ENCODE measurements at regions of chr14 and their contacts with region 1.

Region 1: DNA sequence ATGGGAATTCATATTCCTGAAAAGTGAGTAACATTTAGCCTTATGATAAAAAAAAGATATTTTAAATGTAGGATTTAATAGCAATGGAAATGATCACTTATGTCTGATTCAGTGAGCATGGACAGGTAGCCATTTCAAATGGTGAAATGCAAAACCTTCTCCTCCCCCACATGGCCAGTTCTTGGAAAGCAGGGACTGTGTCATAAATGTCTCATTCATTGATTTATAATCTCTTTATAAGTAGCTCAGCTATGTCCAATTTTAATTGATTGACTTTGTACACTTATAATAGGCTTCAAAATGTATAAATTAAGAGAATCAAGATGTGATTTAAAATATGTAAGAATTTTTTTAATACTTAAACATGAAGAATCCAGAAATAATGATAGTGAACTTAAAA is 24.6 kb upstream of the SCFD1 start:
- DNase-seq: no peak
- ATAC-seq: no peak
- H3K4me3 Mint-ChIP-seq: no peak overlapping the region
- H3K27ac Mint-ChIP-seq: no peak overlapping the region
- H3K4me1 Mint-ChIP-seq: no peaks in the 10 kb centered on the region
- H3K27me3 Mint-ChIP-seq: no peaks in the 10 kb centered on the region
- CTCF ChIP-seq: no peak

Region 2: DNA sequence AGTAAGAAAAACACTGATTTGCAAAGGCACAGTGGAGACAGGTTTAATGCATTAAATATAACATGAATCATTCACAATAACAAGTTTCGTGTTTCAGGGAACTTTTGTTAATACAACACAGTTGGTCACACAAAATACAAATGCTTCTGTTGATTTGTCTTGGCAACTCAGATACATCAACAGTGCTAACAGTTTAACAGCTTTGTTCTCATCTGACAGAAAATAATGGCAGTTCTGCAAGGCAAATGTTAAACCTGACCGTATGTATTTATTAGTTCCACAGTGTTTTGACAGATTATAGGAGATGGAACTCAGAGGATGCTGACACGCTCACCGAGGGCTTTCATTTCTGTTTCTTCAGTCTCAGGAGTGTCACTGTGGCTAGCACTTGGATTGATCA is 1020.6 kb before region 1 on chr14:
- CTCF ChIA-PET with region 1: no interaction called
- POLR2A ChIA-PET with region 1: no interaction called
- intact Hi-C with region 1: no loop called
- DNase-seq: no peak
- ATAC-seq: no peak
- H3K4me3 Mint-ChIP-seq: no peak overlapping the region
- H3K27ac Mint-ChIP-seq: no peak overlapping the region
- H3K4me1 Mint-ChIP-seq: peaks cover 13% of the 10 kb centered on the region
- H3K27me3 Mint-ChIP-seq: no peaks in the 10 kb centered on the region
- CTCF ChIP-seq: no peak

Region 3: DNA sequence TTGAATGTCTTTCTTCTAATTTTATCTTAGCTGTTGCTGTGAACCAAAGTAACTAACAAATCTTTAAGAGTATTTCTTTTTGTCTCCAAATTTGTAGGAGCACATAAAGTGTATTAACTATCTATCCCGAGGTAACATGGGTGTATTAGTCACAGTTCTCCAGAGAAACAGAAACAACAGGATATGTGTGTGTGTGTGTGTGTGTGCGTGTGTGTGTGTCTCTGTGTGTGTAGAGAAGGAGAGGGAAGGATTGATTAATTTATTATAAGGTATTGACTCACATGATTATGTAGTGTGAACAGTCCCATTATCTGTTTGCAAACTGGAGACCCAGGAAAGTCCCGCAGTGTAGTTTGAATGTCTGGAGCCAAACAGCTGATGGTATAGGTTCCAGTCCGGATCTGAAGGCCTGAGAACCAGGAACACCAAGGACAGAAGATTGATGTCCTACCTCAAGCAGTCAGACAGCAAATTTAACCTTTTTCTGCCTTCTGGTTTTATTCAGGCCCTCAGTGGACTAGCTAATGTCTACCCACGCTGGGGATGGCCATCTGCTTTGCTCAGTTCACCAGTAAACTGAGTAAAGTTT is 24.2 kb before region 1 on chr14:
- CTCF ChIA-PET with region 1: no interaction called
- POLR2A ChIA-PET with region 1: no interaction called
- intact Hi-C with region 1: loop called (anchors 2 kb)
- DNase-seq: no peak
- ATAC-seq: no peak
- H3K4me3 Mint-ChIP-seq: no peak overlapping the region
- H3K27ac Mint-ChIP-seq: no peak overlapping the region
- H3K4me1 Mint-ChIP-seq: peaks cover 77% of the 10 kb centered on the region
- H3K27me3 Mint-ChIP-seq: no peaks in the 10 kb centered on the region
- CTCF ChIP-seq: no peak